ENCODE measurements at regions of chr19 and their contacts with region 1.

Region 1: GRCh38 chr19:47697863-47698609 is 15.2 kb upstream of the EHD2 start:
- DNase-seq: peak; percentile 72 to 77 (median 75)
- ATAC-seq: peak; percentile 88 to 97 (median 94)
- H3K4me3 ChIP-seq: no peak overlapping the region
- H3K27ac ChIP-seq: peak overlapping the region in 1 of 3 donors; percentile 24
- H3K4me1 ChIP-seq: peaks cover 0 to 5% (median 0%) of the 10 kb centered on the region in 4 donors
- H3K27me3 ChIP-seq: no peaks in the 10 kb centered on the region
- CTCF ChIP-seq: peak; percentile 95 to 98 (median 98)
- POLR2A ChIP-seq: no peak

Region 2: DNA sequence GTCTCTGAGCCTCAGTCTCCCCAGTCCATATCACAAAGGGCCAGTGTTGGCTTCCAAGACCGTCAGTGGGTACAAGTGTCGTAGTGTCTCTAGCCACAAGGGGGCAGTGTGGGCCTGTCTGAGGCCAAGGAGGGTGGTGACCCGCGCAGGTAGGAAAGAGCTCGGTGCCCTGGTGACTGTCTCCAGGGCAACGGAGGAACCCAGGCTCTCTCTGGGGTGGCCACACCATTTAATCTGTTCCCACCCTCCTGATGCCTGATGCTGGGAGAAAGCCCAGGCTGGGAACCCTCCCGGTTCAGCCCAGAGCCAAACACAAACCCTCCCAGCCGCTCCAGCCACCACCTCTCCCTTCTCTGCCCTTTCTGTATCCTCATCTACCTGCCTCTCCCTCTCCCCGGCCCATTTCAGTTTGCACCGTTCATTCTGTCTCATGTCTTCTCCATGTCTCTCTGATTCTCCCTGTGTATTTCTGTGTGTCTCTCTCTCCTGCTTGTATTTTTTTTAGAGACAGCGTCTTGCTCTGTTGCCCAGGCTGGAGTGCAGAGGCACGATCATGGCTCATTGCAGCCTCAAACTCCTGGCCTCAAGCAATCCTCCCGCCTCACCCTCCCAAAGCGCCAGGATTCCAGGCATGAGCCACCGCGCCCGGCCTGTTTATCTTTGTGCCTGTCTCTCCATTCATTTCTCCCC is 261.2 kb before region 1 on chr19:
- intact Hi-C with region 1: loop called (anchors 5 kb)
- DNase-seq: peak; percentile 78 to 85 (median 83)
- ATAC-seq: peak; percentile 94 to 100 (median 98)
- H3K4me3 ChIP-seq: no peak overlapping the region
- H3K27ac ChIP-seq: no peak overlapping the region
- H3K4me1 ChIP-seq: no peaks in the 10 kb centered on the region
- H3K27me3 ChIP-seq: no peaks in the 10 kb centered on the region
- CTCF ChIP-seq: peak; percentile 87 to 91 (median 88)
- POLR2A ChIP-seq: no peak

Region 3: DNA sequence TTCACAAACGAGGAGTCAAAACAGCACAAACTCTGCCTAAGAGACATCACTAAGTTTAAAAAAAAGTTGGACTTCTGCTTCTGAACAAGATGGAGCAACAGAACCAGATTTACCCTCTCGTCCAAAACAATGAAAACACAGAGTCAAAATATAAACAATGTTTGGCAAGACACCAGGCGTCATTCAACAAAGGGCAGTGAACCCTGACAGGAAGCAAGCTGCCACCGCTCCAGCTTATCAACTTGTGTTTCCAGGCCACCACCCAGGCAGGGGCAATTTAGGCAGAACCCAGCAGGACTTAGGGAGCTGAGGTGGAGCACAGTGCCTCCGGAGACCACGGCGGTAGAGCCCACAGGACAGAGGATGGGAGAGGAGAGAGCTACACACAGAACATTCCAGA is 174.6 kb before region 1 on chr19:
- intact Hi-C with region 1: loop called in 1 of 2 experiments (anchors 10 kb)
- DNase-seq: no peak
- ATAC-seq: peak; percentile 35 to 75 (median 63)
- H3K4me3 ChIP-seq: no peak overlapping the region
- H3K27ac ChIP-seq: no peak overlapping the region
- H3K4me1 ChIP-seq: peaks cover 0 to 6% (median 0%) of the 10 kb centered on the region in 4 donors
- H3K27me3 ChIP-seq: no peaks in the 10 kb centered on the region
- CTCF ChIP-seq: no peak
- POLR2A ChIP-seq: no peak

Region 4: GRCh38 chr19:47531640-47532387 is 166.2 kb before region 1 on chr19:
- intact Hi-C with region 1: loop called (anchors 10 kb)
- DNase-seq: no peak
- ATAC-seq: peak in 3 of 4 donors; percentile 30 to 56 (median 38)
- H3K4me3 ChIP-seq: no peak overlapping the region
- H3K27ac ChIP-seq: no peak overlapping the region
- H3K4me1 ChIP-seq: no peaks in the 10 kb centered on the region
- H3K27me3 ChIP-seq: no peaks in the 10 kb centered on the region
- CTCF ChIP-seq: no peak
- POLR2A ChIP-seq: no peak

Region 5: GRCh38 chr19:47587295-47587694 is 110.7 kb before region 1 on chr19:
- intact Hi-C with region 1: no loop called
- DNase-seq: no peak
- ATAC-seq: no peak
- H3K4me3 ChIP-seq: no peak overlapping the region
- H3K27ac ChIP-seq: no peak overlapping the region
- H3K4me1 ChIP-seq: no peaks in the 10 kb centered on the region
- H3K27me3 ChIP-seq: no peaks in the 10 kb centered on the region
- CTCF ChIP-seq: no peak
- POLR2A ChIP-seq: no peak

Measured in right lobe of liver (tissue), 6 donors.